Endothelial cell of umbilical vein (primary cell): ENCODE measurements at regions of chr2 and their contacts with region 1.

Region 1: DNA sequence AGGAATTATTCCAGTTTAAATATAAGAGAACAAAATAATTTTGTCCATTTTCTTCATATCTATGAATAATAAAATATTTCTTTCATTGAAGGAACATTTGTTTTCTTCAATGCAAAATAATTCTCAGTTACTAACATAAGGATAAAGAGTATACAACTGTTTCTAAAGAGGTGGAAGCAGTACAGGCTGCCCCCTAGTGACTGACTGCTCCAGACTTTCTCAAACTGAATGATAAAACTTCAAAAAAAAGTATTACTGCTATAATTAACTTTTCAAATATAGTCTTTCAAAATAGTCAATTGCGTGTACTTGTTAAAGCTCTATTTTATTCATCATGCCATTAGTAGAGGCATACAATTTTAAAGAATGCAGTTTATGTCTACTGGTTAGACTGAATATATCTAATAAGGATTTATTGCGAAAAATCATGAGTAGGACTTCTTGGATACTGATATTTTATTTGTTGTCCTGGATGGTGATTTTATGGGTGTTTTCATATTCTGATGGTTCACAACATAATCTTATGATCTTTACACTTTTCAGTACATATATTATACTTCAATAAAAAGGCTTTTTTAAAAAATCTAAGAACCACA is 100.1 kb downstream of the WDPCP start:
- DNase-seq: peak; percentile 48
- H3K4me3 ChIP-seq: no peak overlapping the region
- H3K27ac ChIP-seq: no peak overlapping the region
- H3K4me1 ChIP-seq: no peaks in the 10 kb centered on the region
- H3K27me3 ChIP-seq: no peaks in the 10 kb centered on the region
- CTCF ChIP-seq: peak; percentile 34 to 62
- POLR2A ChIP-seq: no peak

Region 2: DNA sequence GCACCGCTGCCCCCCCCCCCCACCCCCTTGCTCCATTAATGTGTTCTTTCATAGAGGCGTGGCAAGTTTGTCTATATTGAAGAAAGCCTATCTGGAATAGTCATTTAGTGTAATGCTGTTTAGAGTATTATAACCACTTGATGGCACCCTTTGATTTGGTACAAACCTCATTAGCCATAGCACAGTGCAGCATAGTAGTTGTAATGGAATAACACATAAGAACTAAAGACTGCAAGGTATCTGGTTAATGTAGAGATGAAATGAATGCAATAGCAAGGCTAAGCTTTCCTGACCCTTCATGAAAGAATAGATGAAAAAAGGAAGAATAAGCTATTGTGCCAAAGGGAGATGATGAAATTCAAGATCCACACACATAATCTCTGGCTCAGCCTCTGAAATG is 700.8 kb before region 1 on chr2:
- CTCF ChIA-PET with region 1: interaction called, 42 read pairs
- POLR2A ChIA-PET with region 1: no interaction called
- dilution Hi-C with region 1: no loop called
- intact Hi-C with region 1: loop called (anchors 1 kb)
- DNase-seq: peak; percentile 69
- H3K4me3 ChIP-seq: no peak overlapping the region
- H3K27ac ChIP-seq: no peak overlapping the region
- H3K4me1 ChIP-seq: peaks cover 4% of the 10 kb centered on the region
- H3K27me3 ChIP-seq: no peaks in the 10 kb centered on the region
- CTCF ChIP-seq: peak in 1 of 2 donors; percentile 12
- POLR2A ChIP-seq: no peak

Region 3: DNA sequence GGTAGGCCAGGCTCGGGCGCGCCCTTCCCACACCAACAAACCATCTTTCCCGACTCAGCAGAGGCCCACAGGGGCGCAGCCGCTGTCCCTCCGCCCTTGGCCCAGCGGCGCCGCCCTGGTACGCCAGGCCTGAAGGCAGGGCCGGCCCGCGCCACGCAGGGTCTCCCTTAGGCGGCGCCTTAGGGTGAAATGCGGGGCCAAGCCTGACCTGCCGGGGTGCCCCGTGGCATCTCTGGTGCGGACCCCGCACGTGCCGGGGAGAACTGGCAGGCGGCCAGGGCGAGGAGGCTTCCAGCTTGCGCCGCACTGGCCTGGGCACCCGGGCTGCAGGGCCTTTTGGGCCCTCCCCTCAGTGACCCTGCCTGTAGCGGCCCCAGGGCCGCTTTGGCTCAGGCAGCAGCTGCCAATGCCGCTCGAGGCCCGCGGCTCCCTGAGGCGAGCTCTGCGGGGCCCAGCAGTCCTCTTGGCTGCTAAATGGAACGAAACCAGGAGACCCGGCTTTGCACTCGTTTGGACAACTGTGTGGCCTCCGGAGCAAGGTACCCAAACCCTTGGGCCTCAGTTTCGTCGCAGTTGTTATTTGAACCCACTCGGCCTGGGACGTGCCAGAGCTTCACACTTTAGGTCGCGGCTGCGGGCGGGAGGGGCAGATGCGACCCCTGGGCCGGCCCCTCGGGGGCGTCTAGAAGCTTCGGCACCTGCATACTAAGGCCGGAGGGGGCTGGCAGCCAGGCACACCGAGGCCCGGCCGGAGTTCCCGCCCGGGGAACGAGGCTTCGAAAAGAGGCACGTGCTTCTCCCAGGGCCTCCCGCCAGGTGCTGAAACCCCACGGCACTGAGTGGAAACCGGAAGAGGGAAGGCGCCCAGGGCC is 429.1 kb before region 1 on chr2:
- CTCF ChIA-PET with region 1: no interaction called
- POLR2A ChIA-PET with region 1: no interaction called
- dilution Hi-C with region 1: no loop called
- intact Hi-C with region 1: loop called (anchors 5 kb)
- DNase-seq: no peak
- H3K4me3 ChIP-seq: no peak overlapping the region
- H3K27ac ChIP-seq: no peak overlapping the region
- H3K4me1 ChIP-seq: peaks cover 28% of the 10 kb centered on the region
- H3K27me3 ChIP-seq: peaks cover 72 to 98% of the 10 kb centered on the region in 2 experiments
- CTCF ChIP-seq: no peak
- POLR2A ChIP-seq: no peak

Region 4: GRCh38 chr2:63189026-63189425 is 299.2 kb before region 1 on chr2:
- CTCF ChIA-PET with region 1: interaction called, 3 read pairs
- POLR2A ChIA-PET with region 1: no interaction called
- dilution Hi-C with region 1: no loop called
- intact Hi-C with region 1: loop called (anchors 1 kb)
- DNase-seq: peak; percentile 39
- H3K4me3 ChIP-seq: no peak overlapping the region
- H3K27ac ChIP-seq: no peak overlapping the region
- H3K4me1 ChIP-seq: no peaks in the 10 kb centered on the region
- H3K27me3 ChIP-seq: no peaks in the 10 kb centered on the region
- CTCF ChIP-seq: peak; percentile 73 to 88
- POLR2A ChIP-seq: no peak

Region 5: GRCh38 chr2:63544017-63544627 is 55.9 kb after region 1 on chr2:
- CTCF ChIA-PET with region 1: interaction called, 10 read pairs
- POLR2A ChIA-PET with region 1: no interaction called
- dilution Hi-C with region 1: no loop called
- intact Hi-C with region 1: no loop called
- DNase-seq: peak; percentile 42
- H3K4me3 ChIP-seq: no peak overlapping the region
- H3K27ac ChIP-seq: no peak overlapping the region
- H3K4me1 ChIP-seq: no peaks in the 10 kb centered on the region
- H3K27me3 ChIP-seq: no peaks in the 10 kb centered on the region
- CTCF ChIP-seq: peak; percentile 21 to 29
- POLR2A ChIP-seq: no peak